Caco-2 (cell line): ENCODE measurements at regions of chr9 and their contacts with region 1.

Region 1: GRCh38 chr9:121286973-121287741 is 19.2 kb downstream of the GSN start:
- DNase-seq: peak; percentile 88 to 96
- H3K4me3 ChIP-seq: no peak overlapping the region
- H3K4me3 Mint-ChIP-seq: peak overlapping the region; percentile 62
- H3K27ac Mint-ChIP-seq: peak overlapping the region; percentile 99
- H3K4me1 ChIP-seq: peaks cover 53% of the 10 kb centered on the region
- H3K4me1 Mint-ChIP-seq: peaks cover 56% of the 10 kb centered on the region
- H3K27me3 ChIP-seq: no peaks in the 10 kb centered on the region
- H3K27me3 Mint-ChIP-seq: no peaks in the 10 kb centered on the region
- CTCF ChIP-seq: peak; percentile 28 to 53

Region 2: DNA sequence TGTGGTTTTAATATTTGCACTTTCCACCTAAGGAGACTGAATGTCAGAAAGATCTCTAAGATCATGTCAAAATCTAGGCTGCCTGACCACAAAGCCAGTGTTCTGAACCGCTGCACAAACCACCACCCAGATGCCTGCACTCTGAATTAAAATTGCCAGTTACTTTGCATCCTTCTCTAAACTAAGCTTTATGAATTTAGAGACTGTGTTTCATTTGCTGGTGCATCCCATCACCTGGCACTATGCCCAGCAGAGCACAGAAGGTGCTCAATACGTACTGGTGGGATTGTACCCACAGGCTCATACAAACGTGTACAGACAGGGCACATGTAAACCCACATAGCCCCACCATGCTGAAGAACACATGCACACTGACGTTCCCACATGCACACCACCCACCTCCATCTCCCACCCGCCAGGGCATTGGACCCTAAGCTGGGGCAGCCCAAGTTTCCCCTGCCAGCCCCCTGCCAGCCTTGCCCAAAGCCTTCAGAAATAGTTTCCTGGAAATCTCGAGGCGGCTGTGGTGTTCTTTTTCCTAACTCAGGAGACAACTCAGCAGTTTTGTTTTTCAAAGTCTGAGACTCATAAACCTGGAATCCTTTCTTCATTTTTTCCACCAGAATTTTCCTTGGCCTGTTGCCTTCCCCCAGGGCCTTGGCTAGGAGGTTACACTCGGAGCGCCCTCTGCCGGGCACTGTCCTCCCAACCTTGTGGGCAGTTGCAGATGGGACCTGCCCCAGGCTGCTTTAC is 351.0 kb before region 1 on chr9:
- CTCF ChIA-PET with region 1: no interaction called
- POLR2A ChIA-PET with region 1: no interaction called
- intact Hi-C with region 1: no loop called
- DNase-seq: peak; percentile 86 to 90
- H3K4me3 ChIP-seq: no peak overlapping the region
- H3K4me3 Mint-ChIP-seq: no peak overlapping the region
- H3K27ac Mint-ChIP-seq: no peak overlapping the region
- H3K4me1 ChIP-seq: 0 out of 2 replicates have a peak, but pooled peaks cover 8% of the 10 kb centered on the region
- H3K4me1 Mint-ChIP-seq: peaks cover 10% of the 10 kb centered on the region
- H3K27me3 ChIP-seq: peaks cover 2% of the 10 kb centered on the region; the same call in 1 of the 2 replicates
- H3K27me3 Mint-ChIP-seq: no peaks in the 10 kb centered on the region
- CTCF ChIP-seq: peak; percentile 84 to 96

Region 3: GRCh38 chr9:121222524-121223171 is 64.5 kb before region 1 on chr9:
- CTCF ChIA-PET with region 1: no interaction called
- POLR2A ChIA-PET with region 1: no interaction called
- intact Hi-C with region 1: no loop called
- DNase-seq: peak in 1 of 2 experiments; percentile 38
- H3K4me3 ChIP-seq: no peak overlapping the region
- H3K4me3 Mint-ChIP-seq: no peak overlapping the region
- H3K27ac Mint-ChIP-seq: no peak overlapping the region
- H3K4me1 ChIP-seq: no peaks in the 10 kb centered on the region
- H3K4me1 Mint-ChIP-seq: peaks cover 6% of the 10 kb centered on the region
- H3K27me3 ChIP-seq: no peaks in the 10 kb centered on the region
- H3K27me3 Mint-ChIP-seq: no peaks in the 10 kb centered on the region
- CTCF ChIP-seq: peak; percentile 35 to 58

Region 4: DNA sequence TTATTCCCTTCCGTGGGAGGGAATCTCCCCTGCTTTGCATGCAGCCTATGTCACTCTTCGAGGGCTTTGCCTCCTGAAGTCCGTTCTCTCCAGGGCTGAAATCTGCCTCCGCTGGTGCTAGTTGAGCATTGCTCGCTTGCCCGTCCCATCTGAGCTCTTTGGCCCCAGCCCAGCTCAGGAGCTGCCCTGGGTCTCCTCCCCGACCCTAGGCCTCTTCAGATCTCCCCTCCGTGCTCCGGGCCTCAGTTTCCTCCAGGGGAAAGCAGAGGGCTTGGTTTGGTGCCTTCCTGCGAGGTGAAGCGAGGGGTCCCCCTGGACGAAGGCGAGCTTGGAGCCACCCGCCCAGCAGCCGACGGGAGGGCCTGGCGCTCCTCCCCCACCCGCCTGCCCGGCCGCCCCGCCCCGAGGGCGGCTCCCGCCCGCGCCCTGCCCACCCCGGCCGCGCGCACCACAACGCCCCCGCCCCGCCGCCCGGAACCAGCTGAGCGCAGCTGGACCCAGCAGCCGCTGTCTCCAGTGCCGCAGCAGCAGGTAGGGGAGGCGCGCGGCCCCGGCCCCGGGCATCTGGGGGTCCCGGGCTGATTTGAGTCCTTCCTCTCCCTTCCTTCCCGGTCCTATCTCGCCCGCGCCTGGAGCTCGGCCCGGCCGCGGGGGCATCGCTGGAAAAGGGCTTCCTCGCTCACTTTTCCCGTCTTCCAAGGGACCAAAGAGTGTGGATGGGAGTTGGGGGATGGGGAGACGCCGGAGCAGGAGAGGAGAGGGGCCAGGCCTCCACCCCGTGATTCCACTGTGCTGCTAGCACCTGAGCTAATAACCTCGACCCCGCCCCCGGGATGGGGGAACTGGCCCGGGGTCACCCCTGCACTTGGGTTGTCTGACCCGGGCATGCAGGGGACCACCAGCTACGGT is 19.2 kb before region 1 on chr9 and contains the start of gene GSN:
- CTCF ChIA-PET with region 1: interaction called, 15 read pairs
- POLR2A ChIA-PET with region 1: interaction called, 24 read pairs
- intact Hi-C with region 1: loop called (anchors 1 kb)
- DNase-seq: peak; percentile 74 to 82
- H3K4me3 ChIP-seq: peak within 1 kb of the TSS; percentile 73
- H3K4me3 Mint-ChIP-seq: peak within 1 kb of the TSS; percentile 87
- H3K27ac Mint-ChIP-seq: peak within 1 kb of the TSS; percentile 76
- H3K4me1 ChIP-seq: peaks cover 24% of the 10 kb centered on the region
- H3K4me1 Mint-ChIP-seq: peaks cover 25% of the 10 kb centered on the region
- H3K27me3 ChIP-seq: no peaks in the 10 kb centered on the region
- H3K27me3 Mint-ChIP-seq: no peaks in the 10 kb centered on the region
- CTCF ChIP-seq: peak in 1 of 2 experiments; percentile 2
- total RNA-seq, gene GSN: 99.6 and 100 TPM in 2 replicates

Region 5: DNA sequence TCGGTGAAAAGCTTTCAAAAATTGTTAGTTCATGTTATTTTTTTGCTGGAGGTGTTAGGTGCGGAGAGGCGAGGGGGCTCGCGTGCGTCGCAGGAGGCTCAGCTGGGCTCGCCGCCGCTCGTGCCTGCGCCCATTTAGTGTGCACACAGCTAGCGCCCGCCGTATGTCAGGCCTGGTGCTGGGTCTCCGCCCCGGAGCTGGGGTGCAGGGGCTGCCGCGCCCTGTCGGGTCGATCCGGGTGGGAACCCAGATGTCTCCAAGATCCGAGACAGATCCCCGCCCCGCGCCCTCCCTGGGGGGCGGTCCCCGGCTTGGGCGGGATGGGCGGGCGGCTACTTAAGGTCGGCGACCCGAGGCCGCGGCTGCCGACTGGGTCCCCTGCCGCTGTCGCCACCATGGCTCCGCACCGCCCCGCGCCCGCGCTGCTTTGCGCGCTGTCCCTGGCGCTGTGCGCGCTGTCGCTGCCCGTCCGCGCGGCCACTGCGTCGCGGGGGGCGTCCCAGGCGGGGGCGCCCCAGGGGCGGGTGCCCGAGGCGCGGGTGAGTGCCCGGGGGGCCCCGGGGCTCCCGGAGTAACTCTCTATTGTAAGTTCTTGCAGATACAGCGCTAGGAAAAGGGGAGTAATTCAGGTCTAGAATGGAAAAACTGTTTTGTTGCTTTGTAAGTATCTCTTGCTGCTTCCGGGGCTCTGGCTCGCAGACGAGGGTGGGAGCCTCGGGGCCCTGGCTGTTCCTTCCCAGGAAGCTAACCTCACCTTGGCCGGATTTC is 12.5 kb after region 1 on chr9:
- CTCF ChIA-PET with region 1: interaction called, 15 read pairs
- POLR2A ChIA-PET with region 1: interaction called, 7 read pairs
- intact Hi-C with region 1: loop called (anchors 1 kb)
- DNase-seq: peak in 1 of 2 experiments; percentile 44
- H3K4me3 ChIP-seq: peak overlapping the region; percentile 49
- H3K4me3 Mint-ChIP-seq: peak overlapping the region; percentile 83
- H3K27ac Mint-ChIP-seq: peak overlapping the region; percentile 74
- H3K4me1 ChIP-seq: peaks cover 59% of the 10 kb centered on the region
- H3K4me1 Mint-ChIP-seq: peaks cover 41% of the 10 kb centered on the region
- H3K27me3 ChIP-seq: no peaks in the 10 kb centered on the region
- H3K27me3 Mint-ChIP-seq: no peaks in the 10 kb centered on the region
- CTCF ChIP-seq: no peak

Region 6: GRCh38 chr9:121305269-121305994 is 18.3 kb after region 1 on chr9:
- CTCF ChIA-PET with region 1: interaction called, 3 read pairs
- POLR2A ChIA-PET with region 1: interaction called, 7 read pairs
- intact Hi-C with region 1: loop called (anchors 2 kb)
- DNase-seq: no peak
- H3K4me3 ChIP-seq: no peak overlapping the region
- H3K4me3 Mint-ChIP-seq: no peak overlapping the region
- H3K27ac Mint-ChIP-seq: no peak overlapping the region
- H3K4me1 ChIP-seq: peaks cover 22% of the 10 kb centered on the region
- H3K4me1 Mint-ChIP-seq: peaks cover 11% of the 10 kb centered on the region
- H3K27me3 ChIP-seq: no peaks in the 10 kb centered on the region
- H3K27me3 Mint-ChIP-seq: no peaks in the 10 kb centered on the region
- CTCF ChIP-seq: no peak

Region 7: DNA sequence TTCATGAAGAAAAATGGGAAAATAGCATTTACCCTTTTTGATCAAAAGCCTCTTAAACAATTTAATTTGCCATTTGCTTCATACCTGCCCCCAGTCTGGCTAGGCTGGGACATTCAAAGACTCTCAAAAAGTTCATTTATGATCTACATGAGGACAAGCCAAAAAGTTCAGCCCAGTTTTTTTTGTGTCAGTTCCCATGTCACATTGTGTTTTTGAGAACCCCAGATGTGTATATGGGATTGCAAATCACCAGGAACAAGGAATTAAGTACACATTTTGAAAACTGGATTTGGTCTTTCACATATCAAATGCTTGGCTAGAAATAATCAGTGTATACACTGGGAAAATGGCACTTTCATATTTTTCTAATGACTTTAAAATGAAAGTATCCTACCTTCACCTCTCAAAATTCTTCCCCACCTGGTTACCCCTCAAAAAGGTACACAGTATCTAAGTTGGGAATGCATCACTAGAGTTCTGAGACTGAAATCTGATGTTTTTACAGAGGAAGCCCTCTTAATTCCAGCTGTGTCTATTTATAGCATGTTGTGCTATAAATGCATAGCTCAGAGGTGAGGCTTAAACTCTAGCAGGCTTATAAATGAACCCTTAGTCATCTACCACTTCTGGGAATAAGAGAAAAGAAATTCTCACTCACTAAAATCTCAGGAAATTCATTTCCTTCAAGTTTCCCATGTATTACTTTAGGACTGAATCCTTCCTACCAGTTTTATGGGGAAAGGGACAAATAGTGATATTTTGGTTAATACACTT is 73.6 kb after region 1 on chr9:
- CTCF ChIA-PET with region 1: no interaction called
- POLR2A ChIA-PET with region 1: interaction called, 19 read pairs
- intact Hi-C with region 1: no loop called
- DNase-seq: no peak
- H3K4me3 ChIP-seq: no peak overlapping the region
- H3K4me3 Mint-ChIP-seq: no peak overlapping the region
- H3K27ac Mint-ChIP-seq: no peak overlapping the region
- H3K4me1 ChIP-seq: peaks cover 10% of the 10 kb centered on the region; the same call in 1 of the 2 replicates
- H3K4me1 Mint-ChIP-seq: peaks cover 27% of the 10 kb centered on the region
- H3K27me3 ChIP-seq: no peaks in the 10 kb centered on the region
- H3K27me3 Mint-ChIP-seq: no peaks in the 10 kb centered on the region
- CTCF ChIP-seq: no peak